Mammary epithelial cell (primary cell): ENCODE measurements at regions of chr13 and their contacts with region 1.

Region 1: GRCh38 chr13:34076943-34077703 is 259.2 kb downstream of the RFC3 start:
- DNase-seq: peak; percentile 16
- H3K4me3 ChIP-seq: no peak overlapping the region
- H3K27ac ChIP-seq: peak overlapping the region; percentile 25
- H3K4me1 ChIP-seq: peaks cover 10% of the 10 kb centered on the region
- H3K27me3 ChIP-seq: no peaks in the 10 kb centered on the region
- CTCF ChIP-seq: peak; percentile 54 to 68

Region 2: GRCh38 chr13:33799950-33800592 is 277.1 kb before region 1 on chr13:
- CTCF ChIA-PET with region 1: no interaction called
- dilution Hi-C with region 1: no loop called
- in situ Hi-C with region 1: no loop called
- intact Hi-C with region 1: loop called (anchors 1 kb)
- DNase-seq: peak; percentile 11
- H3K4me3 ChIP-seq: no peak overlapping the region
- H3K27ac ChIP-seq: no peak overlapping the region
- H3K4me1 ChIP-seq: peaks cover 8% of the 10 kb centered on the region
- H3K27me3 ChIP-seq: no peaks in the 10 kb centered on the region
- CTCF ChIP-seq: peak; percentile 48 to 55

Region 3: GRCh38 chr13:33937373-33938098 is 139.6 kb before region 1 on chr13:
- CTCF ChIA-PET with region 1: no interaction called
- dilution Hi-C with region 1: no loop called
- in situ Hi-C with region 1: loop called (anchors 5 kb)
- intact Hi-C with region 1: no loop called
- DNase-seq: peak; percentile 91
- H3K4me3 ChIP-seq: no peak overlapping the region
- H3K27ac ChIP-seq: peak overlapping the region; percentile 62
- H3K4me1 ChIP-seq: peaks cover 26% of the 10 kb centered on the region
- H3K27me3 ChIP-seq: no peaks in the 10 kb centered on the region
- CTCF ChIP-seq: no peak

Region 4: DNA sequence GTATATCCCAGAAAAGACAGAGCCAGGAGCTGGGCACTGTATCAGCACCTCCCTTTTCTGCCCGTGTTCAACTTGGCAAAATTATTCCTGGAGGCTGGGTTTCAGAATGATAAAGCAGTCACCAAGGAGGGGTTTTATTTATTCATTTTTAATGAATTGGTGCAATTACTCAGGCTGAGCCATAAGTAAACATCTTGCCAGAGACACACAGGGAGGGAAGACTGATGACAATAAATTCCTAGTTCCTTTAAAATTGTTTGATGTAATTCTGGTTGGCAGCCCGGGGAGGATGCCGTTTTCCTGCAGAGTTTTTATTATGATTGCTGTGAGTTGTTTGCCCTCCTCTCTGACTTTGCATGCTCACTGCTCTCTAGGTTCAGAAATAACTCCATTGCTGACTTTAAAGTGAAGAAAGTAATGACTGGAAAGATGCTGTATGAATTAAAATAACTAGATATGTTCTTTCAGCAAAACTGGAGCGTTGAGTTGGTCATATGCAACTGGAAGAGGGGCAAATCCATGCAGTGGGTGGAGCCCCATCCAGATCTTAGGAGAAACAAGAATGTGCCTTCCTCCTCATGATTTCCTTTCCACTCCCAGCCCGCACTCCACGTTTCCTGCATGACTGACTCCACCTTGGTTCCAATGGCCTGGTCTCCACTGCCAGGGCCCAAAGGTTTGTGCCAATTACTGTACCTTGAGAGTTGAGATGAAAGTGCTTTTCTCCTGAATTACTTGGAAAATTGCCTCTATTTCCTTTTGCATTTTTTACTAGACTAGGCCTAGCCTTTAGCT is 77.1 kb before region 1 on chr13:
- CTCF ChIA-PET with region 1: no interaction called
- dilution Hi-C with region 1: no loop called
- in situ Hi-C with region 1: no loop called
- intact Hi-C with region 1: loop called (anchors 2 kb)
- DNase-seq: no peak
- H3K4me3 ChIP-seq: no peak overlapping the region
- H3K27ac ChIP-seq: no peak overlapping the region
- H3K4me1 ChIP-seq: no peaks in the 10 kb centered on the region
- H3K27me3 ChIP-seq: no peaks in the 10 kb centered on the region
- CTCF ChIP-seq: no peak

Region 5: GRCh38 chr13:34046457-34046856 is 30.7 kb before region 1 on chr13:
- CTCF ChIA-PET with region 1: no interaction called
- dilution Hi-C with region 1: no loop called
- in situ Hi-C with region 1: no loop called
- intact Hi-C with region 1: no loop called
- DNase-seq: no peak
- H3K4me3 ChIP-seq: no peak overlapping the region
- H3K27ac ChIP-seq: no peak overlapping the region
- H3K4me1 ChIP-seq: peaks cover 28% of the 10 kb centered on the region
- H3K27me3 ChIP-seq: no peaks in the 10 kb centered on the region
- CTCF ChIP-seq: no peak

Region 6: GRCh38 chr13:34300559-34300958 is 223.4 kb after region 1 on chr13:
- CTCF ChIA-PET with region 1: no interaction called
- dilution Hi-C with region 1: no loop called
- in situ Hi-C with region 1: no loop called
- intact Hi-C with region 1: loop called (anchors 5 kb)
- DNase-seq: peak; percentile 5
- H3K4me3 ChIP-seq: no peak overlapping the region
- H3K27ac ChIP-seq: no peak overlapping the region
- H3K4me1 ChIP-seq: peaks cover 30% of the 10 kb centered on the region
- H3K27me3 ChIP-seq: no peaks in the 10 kb centered on the region
- CTCF ChIP-seq: no peak

Region 7: GRCh38 chr13:35157143-35157755 is 1080.1 kb after region 1 on chr13:
- CTCF ChIA-PET with region 1: no interaction called
- dilution Hi-C with region 1: no loop called
- in situ Hi-C with region 1: loop called in 1 of 2 experiments (anchors 25 kb)
- intact Hi-C with region 1: loop called (anchors 2 kb)
- DNase-seq: peak; percentile 29
- H3K4me3 ChIP-seq: no peak overlapping the region
- H3K27ac ChIP-seq: no peak overlapping the region
- H3K4me1 ChIP-seq: no peaks in the 10 kb centered on the region
- H3K27me3 ChIP-seq: no peaks in the 10 kb centered on the region
- CTCF ChIP-seq: peak; percentile 68 to 72